Naive thymus-derived CD8-positive, alpha-beta T cell (primary cell): ENCODE measurements at regions of chr17 and their contacts with region 1.

Region 1: GRCh38 chr17:5191541-5192417 is at the start of gene ZNF594:
- DNase-seq: peak; percentile 93 to 98 (median 97)
- ATAC-seq: peak; percentile 98
- H3K4me3 Mint-ChIP-seq: peak within 1 kb of the TSS; percentile 90 to 97 (median 95)
- H3K27ac Mint-ChIP-seq: peak within 1 kb of the TSS; percentile 86 to 98 (median 96)
- H3K4me1 Mint-ChIP-seq: peaks cover 18 to 41% (median 35%) of the 10 kb centered on the region in 4 donors
- H3K27me3 Mint-ChIP-seq: no peaks in the 10 kb centered on the region
- polyA plus RNA-seq, gene ZNF594: 1.7 to 3.3 (median 3.3) TPM

Region 2: GRCh38 chr17:5181509-5182305 is 10.1 kb before region 1 on chr17:
- POLR2A ChIA-PET with region 1: interaction called, 14 read pairs
- DNase-seq: no peak
- ATAC-seq: no peak
- H3K4me3 Mint-ChIP-seq: peak overlapping the region in 2 of 10 donors; percentile 20 to 30
- H3K27ac Mint-ChIP-seq: peak overlapping the region in 2 of 10 donors; percentile 7 to 84
- H3K4me1 Mint-ChIP-seq: peaks cover 0 to 4% (median 2%) of the 10 kb centered on the region in 4 donors
- H3K27me3 Mint-ChIP-seq: no peaks in the 10 kb centered on the region

Region 3: DNA sequence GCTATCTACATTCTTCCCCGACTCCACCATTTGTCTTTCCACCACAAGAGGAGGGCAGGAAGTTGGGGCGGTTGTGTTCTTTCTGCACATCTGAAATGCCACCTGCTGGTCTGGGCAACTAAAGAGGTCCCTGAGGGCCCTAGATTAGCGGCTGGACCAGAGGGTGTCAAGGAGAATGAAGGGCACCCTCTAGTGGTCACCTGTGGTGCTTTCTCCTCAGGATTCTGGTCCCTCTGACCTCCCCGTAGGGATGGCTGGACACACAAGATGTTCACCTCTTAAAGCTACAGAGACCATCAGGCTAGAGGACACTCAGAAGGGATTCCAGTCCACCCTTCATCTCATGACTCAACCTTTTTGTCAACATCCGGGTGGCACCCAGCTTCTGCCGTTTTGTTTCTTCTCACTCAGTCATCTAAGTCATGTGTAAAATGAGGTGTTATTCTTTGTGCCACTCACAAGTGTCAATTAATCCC is 45.8 kb after region 1 on chr17:
- POLR2A ChIA-PET with region 1: interaction called, 12 read pairs
- DNase-seq: peak in 1 of 10 donors; percentile 42
- ATAC-seq: peak in 1 of 2 donors; percentile 8
- H3K4me3 Mint-ChIP-seq: peak overlapping the region in 2 of 10 donors; percentile 17 to 23
- H3K27ac Mint-ChIP-seq: peak overlapping the region; percentile 4 to 82 (median 66)
- H3K4me1 Mint-ChIP-seq: peaks cover 16 to 73% (median 44%) of the 10 kb centered on the region in 4 donors
- H3K27me3 Mint-ChIP-seq: no peaks in the 10 kb centered on the region

Region 4: DNA sequence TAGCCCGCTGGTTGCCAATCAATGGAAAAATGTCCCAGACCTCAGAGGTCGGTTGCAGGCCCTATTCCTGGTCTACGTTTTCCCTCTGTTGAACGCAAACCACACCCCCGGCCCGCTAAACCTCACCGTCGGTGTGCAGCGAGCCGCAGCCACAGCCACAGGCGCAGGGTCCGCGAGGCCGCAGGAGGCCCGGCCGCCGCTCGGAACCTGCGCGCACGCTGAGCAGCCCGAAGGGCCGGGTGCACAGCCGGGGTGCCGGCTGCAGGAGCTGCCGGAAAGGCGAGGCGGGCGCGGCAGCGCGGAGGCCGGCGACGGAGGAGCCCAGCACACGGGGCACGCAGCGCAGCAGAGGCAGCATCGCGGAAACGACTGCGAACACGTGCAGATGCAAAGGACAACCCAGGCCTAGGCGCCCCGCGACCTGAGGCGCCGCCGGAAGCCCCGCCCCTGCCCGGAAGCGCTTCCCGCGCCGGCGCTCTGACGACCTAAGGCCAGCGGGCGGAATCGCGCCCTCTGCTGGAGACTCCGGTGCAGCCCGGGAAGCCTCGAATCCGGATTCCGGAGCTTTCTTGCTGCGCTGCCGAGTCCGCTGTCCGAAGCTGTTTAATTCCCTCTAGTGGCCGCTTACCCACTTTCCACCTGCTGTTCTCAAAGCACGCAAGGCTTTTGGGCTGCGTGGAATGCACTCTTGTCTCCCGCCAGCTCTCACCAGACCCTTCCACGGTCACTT is 247.1 kb after region 1 on chr17 and contains the start of gene C1QBP:
- POLR2A ChIA-PET with region 1: interaction called, 10 read pairs
- DNase-seq: peak; percentile 85 to 94 (median 91)
- ATAC-seq: peak; percentile 85 to 88
- H3K4me3 Mint-ChIP-seq: peak within 1 kb of the TSS; percentile 77 to 95 (median 90)
- H3K27ac Mint-ChIP-seq: peak within 1 kb of the TSS; percentile 84 to 99 (median 97)
- H3K4me1 Mint-ChIP-seq: peaks cover 9 to 38% (median 34%) of the 10 kb centered on the region in 4 donors
- H3K27me3 Mint-ChIP-seq: no peaks in the 10 kb centered on the region
- polyA plus RNA-seq, gene C1QBP: 276 to 308 (median 304) TPM